Right ventricle myocardium inferior (tissue), 1 donor: ENCODE measurements at regions of chr1 and their contacts with region 1.

Region 1: GRCh38 chr1:48572646-48573261 is 100.8 kb upstream of the SPATA6 start:
- DNase-seq: no peak
- ATAC-seq: peak; percentile 60

Region 2: DNA sequence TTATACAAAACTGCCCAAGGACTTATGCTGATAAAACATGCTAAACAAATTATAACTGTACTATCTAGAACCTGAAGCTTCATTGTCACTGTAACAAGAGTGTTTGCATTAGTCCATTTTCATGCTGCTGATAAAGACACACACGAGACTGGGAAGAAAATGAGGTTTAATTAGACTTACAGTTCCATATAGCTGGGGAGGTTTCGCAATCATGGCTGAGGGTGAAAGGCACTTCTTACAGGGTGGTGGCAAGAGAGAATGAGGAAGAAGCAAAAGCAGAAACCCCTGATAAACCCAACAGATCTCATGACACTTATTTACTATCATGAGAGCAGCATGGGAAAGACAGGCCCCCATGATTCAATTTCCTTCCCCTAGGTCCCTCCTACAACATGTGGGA is 201.2 kb before region 1 on chr1:
- intact Hi-C with region 1: no loop called
- DNase-seq: no peak
- ATAC-seq: no peak

Region 3: DNA sequence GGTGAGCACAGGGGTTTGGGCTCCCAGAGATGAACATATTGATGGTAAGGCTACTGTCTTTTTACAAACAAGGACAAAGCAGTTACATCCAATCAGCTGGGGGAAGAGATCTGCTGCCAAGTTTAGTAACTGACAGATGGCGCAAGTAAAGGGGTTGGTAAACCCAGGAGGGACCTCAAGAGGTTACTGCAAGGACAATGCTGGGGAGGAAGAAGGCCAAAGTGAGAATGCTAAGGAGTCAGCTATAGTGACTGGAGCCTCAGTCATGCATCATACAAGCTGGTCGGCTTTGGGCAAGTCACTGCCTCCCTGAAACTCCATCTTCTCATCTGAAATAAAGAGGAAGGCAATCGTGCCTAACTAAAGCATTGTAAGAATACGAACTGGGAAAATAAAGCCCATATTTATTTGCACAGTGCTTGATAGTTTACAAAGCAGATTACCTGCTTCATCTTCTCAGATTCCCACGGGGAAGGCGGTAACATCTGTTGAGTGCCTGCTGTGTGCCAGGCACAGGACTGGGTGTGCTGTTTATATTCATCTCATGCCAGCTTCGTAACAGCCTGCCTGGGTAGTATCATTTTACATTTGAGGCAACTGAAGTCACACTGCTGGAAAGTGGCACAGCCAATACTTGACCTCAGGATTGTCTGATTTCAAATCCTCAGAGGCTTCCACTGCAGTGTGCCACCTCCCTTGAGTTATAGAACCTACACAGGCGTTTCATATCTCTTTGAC is 89.1 kb after region 1 on chr1:
- intact Hi-C with region 1: no loop called
- DNase-seq: no peak
- ATAC-seq: no peak

Region 4: GRCh38 chr1:48697066-48697707 is 124.4 kb after region 1 on chr1:
- intact Hi-C with region 1: loop called (anchors 2 kb)
- DNase-seq: no peak
- ATAC-seq: no peak